PC-9 (cell line): ENCODE measurements at regions of chr14 and their contacts with region 1.

Region 1: GRCh38 chr14:54566410-54567223 is at the start of gene SAMD4A:
- DNase-seq: peak; percentile 74 to 81
- H3K4me3 ChIP-seq: peak within 1 kb of the TSS; percentile 78
- H3K27ac ChIP-seq: peak within 1 kb of the TSS; percentile 71
- H3K4me1 ChIP-seq: peaks cover 39% of the 10 kb centered on the region
- H3K27me3 ChIP-seq: no peaks in the 10 kb centered on the region
- CTCF ChIP-seq: peak; percentile 29; the same call in 1 of the 2 replicates
- total RNA-seq, gene SAMD4A: 18.3 and 20.7 TPM in 2 replicates

Region 2: GRCh38 chr14:54366736-54367735 is 199.6 kb before region 1 on chr14:
- CTCF ChIA-PET with region 1: no interaction called
- POLR2A ChIA-PET with region 1: no interaction called
- intact Hi-C with region 1: loop called (anchors 2 kb)
- DNase-seq: peak; percentile 49 to 55
- H3K4me3 ChIP-seq: no peak overlapping the region
- H3K27ac ChIP-seq: no peak overlapping the region
- H3K4me1 ChIP-seq: 0 out of 2 replicates have a peak, but pooled peaks cover 7% of the 10 kb centered on the region
- H3K27me3 ChIP-seq: no peaks in the 10 kb centered on the region
- CTCF ChIP-seq: peak; percentile 54

Region 3: DNA sequence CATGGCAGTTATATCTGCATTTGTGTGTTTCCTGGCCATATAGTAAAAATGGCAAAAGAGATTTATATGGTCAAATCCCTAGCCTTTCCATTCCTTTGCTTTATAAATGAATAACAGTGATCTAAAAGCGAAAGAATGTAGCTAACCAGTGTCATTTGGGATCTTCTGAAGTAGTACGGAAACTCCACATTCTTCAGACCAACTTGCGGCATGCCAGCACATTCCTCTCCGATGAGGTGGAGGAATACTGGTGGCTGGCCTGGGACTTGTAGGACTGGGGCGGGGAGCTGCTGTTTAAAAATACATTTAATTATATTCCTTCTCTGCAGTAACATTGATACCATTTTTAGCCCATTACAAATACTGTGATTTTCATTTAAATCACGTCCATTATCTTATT is 85.6 kb after region 1 on chr14:
- CTCF ChIA-PET with region 1: interaction called, 4 read pairs
- POLR2A ChIA-PET with region 1: interaction called, 11 read pairs
- intact Hi-C with region 1: loop called (anchors 1 kb)
- DNase-seq: peak; percentile 84 to 98
- H3K4me3 ChIP-seq: peak overlapping the region; percentile 42; the same call in 1 of the 2 replicates
- H3K27ac ChIP-seq: peak overlapping the region; percentile 96
- H3K4me1 ChIP-seq: peaks cover 66% of the 10 kb centered on the region
- H3K27me3 ChIP-seq: no peaks in the 10 kb centered on the region
- CTCF ChIP-seq: no peak

Region 4: GRCh38 chr14:54737132-54737711 is 170.6 kb after region 1 on chr14:
- CTCF ChIA-PET with region 1: interaction called, 4 read pairs
- POLR2A ChIA-PET with region 1: interaction called, 17 read pairs
- intact Hi-C with region 1: loop called (anchors 1 kb)
- DNase-seq: peak; percentile 38 to 84
- H3K4me3 ChIP-seq: no peak overlapping the region
- H3K27ac ChIP-seq: peak overlapping the region; percentile 13; the same call in 1 of the 2 replicates
- H3K4me1 ChIP-seq: peaks cover 16% of the 10 kb centered on the region
- H3K27me3 ChIP-seq: no peaks in the 10 kb centered on the region
- CTCF ChIP-seq: no peak

Region 5: GRCh38 chr14:54778618-54779345 is 212.2 kb after region 1 on chr14:
- CTCF ChIA-PET with region 1: interaction called, 14 read pairs
- POLR2A ChIA-PET with region 1: interaction called, 4 read pairs
- intact Hi-C with region 1: loop called (anchors 1 kb)
- DNase-seq: no peak
- H3K4me3 ChIP-seq: no peak overlapping the region
- H3K27ac ChIP-seq: no peak overlapping the region
- H3K4me1 ChIP-seq: peaks cover 5% of the 10 kb centered on the region; the same call in 1 of the 2 replicates
- H3K27me3 ChIP-seq: no peaks in the 10 kb centered on the region
- CTCF ChIP-seq: no peak

Region 6: GRCh38 chr14:54893151-54893760 is 326.6 kb after region 1 on chr14:
- CTCF ChIA-PET with region 1: interaction called, 3 read pairs
- POLR2A ChIA-PET with region 1: no interaction called
- intact Hi-C with region 1: loop called (anchors 1 kb)
- DNase-seq: peak in 1 of 2 experiments; percentile 57
- H3K4me3 ChIP-seq: no peak overlapping the region
- H3K27ac ChIP-seq: no peak overlapping the region
- H3K4me1 ChIP-seq: no peaks in the 10 kb centered on the region
- H3K27me3 ChIP-seq: no peaks in the 10 kb centered on the region
- CTCF ChIP-seq: peak; percentile 86

Region 7: GRCh38 chr14:54931101-54931500 is 364.5 kb after region 1 on chr14:
- CTCF ChIA-PET with region 1: no interaction called
- POLR2A ChIA-PET with region 1: interaction called, 12 read pairs
- intact Hi-C with region 1: no loop called
- DNase-seq: no peak
- H3K4me3 ChIP-seq: no peak overlapping the region
- H3K27ac ChIP-seq: no peak overlapping the region
- H3K4me1 ChIP-seq: no peaks in the 10 kb centered on the region
- H3K27me3 ChIP-seq: no peaks in the 10 kb centered on the region
- CTCF ChIP-seq: no peak